MCF 10A (cell line): ENCODE measurements at regions of chr5 and their contacts with region 1.

Region 1: GRCh38 chr5:157761690-157762621 is 18.4 kb downstream of the LSM11 start:
- DNase-seq: peak; percentile 79
- H3K4me3 Mint-ChIP-seq: no peak overlapping the region
- H3K27ac Mint-ChIP-seq: no peak overlapping the region
- H3K4me1 Mint-ChIP-seq: peaks cover 1% of the 10 kb centered on the region
- H3K27me3 Mint-ChIP-seq: no peaks in the 10 kb centered on the region
- CTCF ChIP-seq: peak; percentile 91

Region 2: GRCh38 chr5:157283434-157283833 is 478.5 kb before region 1 on chr5:
- CTCF ChIA-PET with region 1: no interaction called
- POLR2A ChIA-PET with region 1: no interaction called
- intact Hi-C with region 1: no loop called
- DNase-seq: no peak
- H3K4me3 Mint-ChIP-seq: no peak overlapping the region
- H3K27ac Mint-ChIP-seq: no peak overlapping the region
- H3K4me1 Mint-ChIP-seq: peaks cover 19% of the 10 kb centered on the region
- H3K27me3 Mint-ChIP-seq: no peaks in the 10 kb centered on the region
- CTCF ChIP-seq: no peak

Region 3: GRCh38 chr5:157511651-157512644 is 250.0 kb before region 1 on chr5:
- CTCF ChIA-PET with region 1: no interaction called
- POLR2A ChIA-PET with region 1: no interaction called
- intact Hi-C with region 1: no loop called
- DNase-seq: peak; percentile 99
- H3K4me3 Mint-ChIP-seq: no peak overlapping the region
- H3K27ac Mint-ChIP-seq: no peak overlapping the region
- H3K4me1 Mint-ChIP-seq: peaks cover 37% of the 10 kb centered on the region
- H3K27me3 Mint-ChIP-seq: no peaks in the 10 kb centered on the region
- CTCF ChIP-seq: no peak

Region 4: DNA sequence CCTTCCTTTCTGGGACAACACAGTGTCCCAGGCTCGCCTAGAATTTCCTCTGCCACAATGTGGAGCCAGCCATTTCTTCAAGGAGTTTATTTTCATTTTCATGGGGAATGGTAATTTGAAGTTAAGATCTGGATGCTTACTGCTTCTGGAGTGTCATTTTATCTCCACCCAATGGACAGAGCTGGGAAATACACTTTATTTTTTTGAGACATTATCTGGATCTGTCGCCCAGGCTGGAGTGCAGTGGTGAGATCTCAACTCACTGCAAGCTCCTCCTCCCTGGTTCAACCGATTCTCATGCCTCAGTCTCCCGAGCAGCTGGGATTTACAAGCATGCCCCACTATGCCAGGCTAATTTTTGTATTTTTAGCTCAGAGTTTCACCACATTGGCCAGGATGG is 43.4 kb before region 1 on chr5:
- CTCF ChIA-PET with region 1: no interaction called
- POLR2A ChIA-PET with region 1: no interaction called
- intact Hi-C with region 1: no loop called
- DNase-seq: peak; percentile 69
- H3K4me3 Mint-ChIP-seq: no peak overlapping the region
- H3K27ac Mint-ChIP-seq: no peak overlapping the region
- H3K4me1 Mint-ChIP-seq: no peaks in the 10 kb centered on the region
- H3K27me3 Mint-ChIP-seq: no peaks in the 10 kb centered on the region
- CTCF ChIP-seq: peak; percentile 83

Region 5: GRCh38 chr5:157743163-157744050 is 18.5 kb before region 1 on chr5 and contains the start of gene LSM11:
- CTCF ChIA-PET with region 1: interaction called, 177 read pairs
- POLR2A ChIA-PET with region 1: interaction called, 4 read pairs
- intact Hi-C with region 1: no loop called
- DNase-seq: peak; percentile 90
- H3K4me3 Mint-ChIP-seq: peak within 1 kb of the TSS; percentile 78
- H3K27ac Mint-ChIP-seq: peak within 1 kb of the TSS; percentile 68
- H3K4me1 Mint-ChIP-seq: peaks cover 18% of the 10 kb centered on the region
- H3K27me3 Mint-ChIP-seq: no peaks in the 10 kb centered on the region
- CTCF ChIP-seq: peak; percentile 100
- total RNA-seq, gene LSM11: 3.4 and 4.5 TPM in 2 replicates

Region 6: GRCh38 chr5:157778121-157778805 is 16.3 kb after region 1 on chr5:
- CTCF ChIA-PET with region 1: interaction called, 52 read pairs
- POLR2A ChIA-PET with region 1: no interaction called
- intact Hi-C with region 1: no loop called
- DNase-seq: peak; percentile 73
- H3K4me3 Mint-ChIP-seq: no peak overlapping the region
- H3K27ac Mint-ChIP-seq: no peak overlapping the region
- H3K4me1 Mint-ChIP-seq: no peaks in the 10 kb centered on the region
- H3K27me3 Mint-ChIP-seq: no peaks in the 10 kb centered on the region
- CTCF ChIP-seq: no peak

Region 7: DNA sequence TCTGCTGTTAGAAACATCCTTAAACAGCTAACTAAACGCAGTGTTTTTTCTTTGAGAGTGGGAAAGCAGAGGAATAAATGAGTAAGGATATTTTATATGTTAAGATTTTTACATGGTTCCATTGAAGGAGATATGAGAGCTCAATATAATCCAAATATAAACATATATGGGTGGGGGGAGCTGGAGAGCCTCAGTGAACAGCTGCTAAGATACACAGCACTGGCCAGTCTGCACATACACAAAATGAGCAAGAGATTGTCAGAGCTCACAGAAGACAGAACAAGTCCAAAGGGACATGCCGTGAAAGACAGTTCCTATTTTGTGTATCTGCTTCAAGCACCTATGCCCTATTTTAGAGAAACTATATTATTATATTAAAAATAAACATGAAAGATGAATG is 50.1 kb after region 1 on chr5:
- CTCF ChIA-PET with region 1: interaction called, 31 read pairs
- POLR2A ChIA-PET with region 1: no interaction called
- intact Hi-C with region 1: loop called (anchors 1 kb)
- DNase-seq: no peak
- H3K4me3 Mint-ChIP-seq: no peak overlapping the region
- H3K27ac Mint-ChIP-seq: no peak overlapping the region
- H3K4me1 Mint-ChIP-seq: no peaks in the 10 kb centered on the region
- H3K27me3 Mint-ChIP-seq: no peaks in the 10 kb centered on the region
- CTCF ChIP-seq: no peak

Region 8: DNA sequence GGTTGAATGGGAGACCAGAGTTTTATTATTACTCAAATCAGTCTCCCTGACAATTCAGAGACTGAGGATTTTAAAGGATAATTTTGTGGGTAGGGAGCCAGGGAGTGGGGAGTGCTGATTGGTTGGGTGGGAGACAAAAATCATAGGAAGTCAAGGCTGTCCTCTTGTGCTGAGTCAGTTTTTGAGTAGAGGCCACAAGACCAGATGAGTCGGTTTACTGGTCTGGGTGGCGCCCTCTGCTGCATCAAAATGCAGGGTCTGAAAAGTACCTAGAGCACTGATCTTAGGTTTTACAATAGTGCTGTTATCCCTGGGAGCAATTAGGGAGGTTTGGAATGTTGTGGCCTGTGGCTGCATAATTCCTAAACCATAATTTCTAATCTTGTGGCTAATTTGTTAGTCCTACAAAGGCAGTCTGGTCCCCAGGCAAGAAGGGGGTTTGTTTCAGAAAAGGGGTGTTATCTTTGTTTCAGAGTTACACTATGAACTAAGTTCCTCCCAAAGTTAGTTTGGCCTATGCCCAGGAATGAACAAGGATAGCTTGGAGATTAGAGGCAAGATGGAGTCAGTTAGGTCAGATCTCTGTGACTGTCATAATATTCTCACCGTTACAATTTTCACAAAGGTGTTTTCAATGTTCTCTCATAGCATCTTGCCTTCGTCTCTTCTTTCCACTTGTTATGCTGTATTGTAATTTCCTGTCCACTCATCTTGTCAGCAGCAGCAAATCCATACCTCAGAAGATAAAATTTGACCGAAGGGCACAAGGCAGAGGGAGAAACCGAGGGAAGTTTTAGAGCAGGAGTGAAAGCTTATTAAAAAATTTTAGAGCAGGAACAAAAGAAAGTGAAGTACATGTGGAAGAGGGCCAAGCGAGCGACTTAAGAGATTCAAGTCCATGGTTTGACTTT is 156.2 kb after region 1 on chr5:
- CTCF ChIA-PET with region 1: interaction called, 5 read pairs
- POLR2A ChIA-PET with region 1: no interaction called
- intact Hi-C with region 1: loop called (anchors 1 kb)
- DNase-seq: peak; percentile 90
- H3K4me3 Mint-ChIP-seq: no peak overlapping the region
- H3K27ac Mint-ChIP-seq: peak overlapping the region; percentile 38
- H3K4me1 Mint-ChIP-seq: peaks cover 32% of the 10 kb centered on the region
- H3K27me3 Mint-ChIP-seq: no peaks in the 10 kb centered on the region
- CTCF ChIP-seq: peak; percentile 82

Region 9: GRCh38 chr5:158373608-158374395 is 611.8 kb after region 1 on chr5:
- CTCF ChIA-PET with region 1: no interaction called
- POLR2A ChIA-PET with region 1: no interaction called
- intact Hi-C with region 1: loop called (anchors 10 kb)
- DNase-seq: no peak
- H3K4me3 Mint-ChIP-seq: no peak overlapping the region
- H3K27ac Mint-ChIP-seq: no peak overlapping the region
- H3K4me1 Mint-ChIP-seq: peaks cover 6% of the 10 kb centered on the region
- H3K27me3 Mint-ChIP-seq: no peaks in the 10 kb centered on the region
- CTCF ChIP-seq: no peak